ENCODE measurements at regions of chr1 and their contacts with region 1.

Region 1: DNA sequence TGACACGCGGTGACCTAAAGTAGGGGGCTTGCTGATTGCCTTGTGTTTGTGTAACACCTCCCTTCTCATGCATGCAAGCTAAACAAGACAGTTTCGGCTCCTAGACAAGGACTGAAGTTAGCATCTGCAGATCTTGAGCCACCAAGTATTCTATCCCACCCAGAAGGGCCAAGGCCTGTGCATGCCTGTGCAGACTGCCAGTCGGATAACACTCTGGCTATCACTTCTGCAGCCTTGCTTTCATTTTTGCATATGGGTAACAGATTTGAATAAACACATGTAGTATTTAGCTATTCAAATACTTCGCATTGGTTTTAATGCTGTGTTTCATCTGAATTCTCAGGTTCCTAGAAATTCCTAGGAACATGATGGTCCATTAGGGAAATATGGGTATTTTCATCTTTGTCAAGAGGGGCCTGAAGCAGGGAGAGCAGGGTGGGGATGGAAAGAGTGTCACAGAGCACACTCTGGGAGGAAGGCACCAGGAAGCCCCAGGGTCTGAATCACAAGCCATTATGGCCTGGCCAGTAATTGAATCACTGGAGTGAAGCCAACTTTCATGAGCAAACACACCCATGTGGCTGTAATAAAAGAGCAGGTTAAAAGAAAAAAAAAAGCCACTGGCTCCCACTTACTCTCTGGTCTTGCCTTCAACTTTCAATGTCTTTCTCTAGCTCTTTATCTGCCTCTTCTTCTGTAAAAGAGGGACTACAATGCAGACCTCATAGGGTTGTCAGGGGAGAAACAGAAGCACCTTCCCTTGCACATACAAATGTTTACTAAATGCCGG is 28.3 kb downstream of the GADD45A start:
- DNase-seq: peak; percentile 63
- H3K4me3 ChIP-seq: peak overlapping the region; percentile 10
- H3K27ac ChIP-seq: peak overlapping the region; percentile 67
- H3K4me1 ChIP-seq: peaks cover 44% of the 10 kb centered on the region
- CTCF ChIP-seq: no peak

Region 2: DNA sequence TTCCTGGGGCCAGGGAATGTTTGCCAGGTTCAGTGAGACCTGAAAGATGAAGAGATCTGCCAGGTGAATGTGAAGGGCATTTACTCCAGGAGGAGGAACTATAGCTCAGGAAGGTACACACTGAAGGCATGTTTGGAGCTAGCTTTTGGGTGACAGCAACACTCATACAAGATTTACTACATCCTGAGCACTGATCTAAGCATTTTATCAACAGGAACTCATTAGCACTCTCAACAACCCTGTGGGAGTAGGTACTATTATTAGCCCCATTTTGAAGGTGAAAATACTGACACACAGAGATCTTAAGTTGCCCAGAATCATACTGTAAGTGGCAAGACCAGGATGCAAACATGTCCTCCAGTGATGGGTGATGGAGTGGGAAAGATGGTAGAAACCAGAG is 21.5 kb before region 1 on chr1:
- CTCF ChIA-PET with region 1: no interaction called
- POLR2A ChIA-PET with region 1: interaction called, 14 read pairs
- intact Hi-C with region 1: loop called (anchors 2 kb)
- DNase-seq: no peak
- H3K4me3 ChIP-seq: no peak overlapping the region
- H3K27ac ChIP-seq: no peak overlapping the region
- H3K4me1 ChIP-seq: peaks cover 39% of the 10 kb centered on the region
- CTCF ChIP-seq: no peak

Region 3: GRCh38 chr1:67700692-67701410 is 12.4 kb before region 1 on chr1:
- CTCF ChIA-PET with region 1: interaction called, 3 read pairs
- POLR2A ChIA-PET with region 1: interaction called, 21 read pairs
- intact Hi-C with region 1: no loop called
- DNase-seq: peak; percentile 38
- H3K4me3 ChIP-seq: no peak overlapping the region
- H3K27ac ChIP-seq: no peak overlapping the region
- H3K4me1 ChIP-seq: no peaks in the 10 kb centered on the region
- CTCF ChIP-seq: peak; percentile 47; the same call in 1 of the 2 replicates

Region 4: DNA sequence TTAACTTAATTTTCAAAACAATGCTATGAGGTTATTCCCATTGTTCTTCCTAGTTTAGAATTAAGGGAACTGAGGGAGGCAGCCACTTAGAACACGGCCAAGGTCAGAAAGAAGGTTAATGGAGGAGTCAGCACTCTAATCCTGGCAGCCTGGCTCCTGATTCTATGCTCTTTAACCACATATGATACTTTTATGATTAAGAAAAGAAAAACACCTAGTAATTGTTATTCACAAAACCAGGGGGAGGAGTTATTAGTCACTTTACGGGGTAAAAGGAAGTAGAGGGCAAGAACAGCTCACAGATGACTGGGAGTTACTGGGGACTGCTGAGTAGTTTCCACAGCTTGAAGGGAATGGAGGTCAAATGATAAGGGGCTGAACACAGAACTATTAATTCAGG is 10.4 kb after region 1 on chr1:
- CTCF ChIA-PET with region 1: interaction called, 3 read pairs
- POLR2A ChIA-PET with region 1: interaction called, 13 read pairs
- intact Hi-C with region 1: no loop called
- DNase-seq: no peak
- H3K4me3 ChIP-seq: no peak overlapping the region
- H3K27ac ChIP-seq: no peak overlapping the region
- H3K4me1 ChIP-seq: peaks cover 35% of the 10 kb centered on the region
- CTCF ChIP-seq: no peak